Activated B cell treated with CpG ODN at 0.5 μM for 24 hours (primary cell): ENCODE measurements at regions of chr3 and their contacts with region 1.

Region 1: DNA sequence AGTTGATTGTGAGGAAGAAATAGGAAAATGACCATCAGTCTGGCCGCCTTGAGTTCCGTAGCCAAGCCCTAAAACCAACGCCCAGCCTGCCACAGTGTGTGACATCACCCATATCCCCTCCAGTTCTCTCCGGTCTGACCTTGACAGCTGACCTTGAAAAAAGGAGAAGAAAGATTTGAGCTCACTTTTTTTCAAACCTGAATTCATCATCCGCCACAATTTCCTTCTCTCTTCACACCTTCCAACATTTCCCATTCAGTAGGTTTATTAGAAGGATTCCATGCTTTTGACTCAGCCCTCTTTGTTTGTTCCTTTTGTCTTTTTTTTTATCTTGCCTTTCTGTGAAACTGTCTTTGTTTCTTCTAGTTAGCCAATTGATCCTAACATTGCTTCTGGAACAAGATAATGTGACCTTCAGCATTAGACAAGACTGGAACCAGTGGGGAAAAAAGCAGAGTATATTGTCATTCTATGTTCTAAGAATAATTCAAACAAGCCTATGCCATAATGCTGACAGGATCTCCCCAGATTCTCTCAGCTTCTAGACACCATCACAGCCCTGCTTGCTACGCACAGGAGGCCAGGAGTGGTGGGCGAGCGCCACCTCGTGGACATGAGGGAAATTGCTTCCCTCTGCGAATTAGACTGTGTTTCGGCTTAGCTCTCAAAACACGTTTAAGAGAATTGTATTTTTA is 283.1 kb downstream of the FGF12 start:
- DNase-seq: peak; percentile 51
- ATAC-seq: peak; percentile 62
- H3K4me3 Mint-ChIP-seq: no peak overlapping the region
- H3K27ac Mint-ChIP-seq: no peak overlapping the region
- H3K4me1 Mint-ChIP-seq: no peaks in the 10 kb centered on the region
- H3K27me3 Mint-ChIP-seq: peaks cover 21% of the 10 kb centered on the region
- CTCF ChIP-seq: peak; percentile 76

Region 2: DNA sequence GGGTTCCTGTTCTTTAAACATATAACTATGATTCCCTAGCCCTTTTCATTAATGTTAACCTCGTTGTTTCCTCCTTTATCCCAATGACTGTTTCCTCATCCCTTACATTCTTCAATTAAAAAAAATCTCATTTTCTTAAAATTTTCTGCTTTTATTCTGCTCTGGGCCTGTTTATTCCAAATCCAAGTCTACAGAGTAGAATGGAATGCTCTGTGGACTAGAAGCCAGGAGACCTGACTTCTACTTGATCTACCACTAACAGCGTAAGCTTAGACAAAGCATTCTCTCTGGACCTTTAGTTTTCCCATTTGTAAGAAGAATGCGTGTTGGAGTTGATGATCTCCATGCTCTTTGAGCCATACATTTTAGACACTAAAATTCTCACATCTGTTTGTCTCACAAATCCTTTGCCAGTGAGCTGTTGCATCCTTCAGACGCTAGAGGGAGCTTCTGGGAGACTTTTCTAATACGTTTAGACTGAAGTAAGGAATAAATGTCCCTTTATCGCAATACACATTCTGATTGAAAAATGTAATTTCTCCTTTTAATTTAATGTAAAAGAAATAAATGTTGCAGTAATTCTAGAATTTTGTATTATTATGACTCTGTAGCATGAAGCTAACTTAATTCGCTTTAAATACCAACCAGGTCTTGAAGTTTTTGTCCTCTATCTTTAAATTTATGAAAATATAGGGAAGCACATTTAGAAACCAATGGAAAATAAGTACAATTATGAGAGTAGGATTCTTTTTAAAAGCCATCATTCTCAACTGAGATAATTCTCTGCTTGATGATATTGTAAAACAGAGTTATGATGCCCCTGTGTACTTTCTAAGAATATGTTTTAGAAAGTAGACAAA is 1560.0 kb before region 1 on chr3:
- CTCF ChIA-PET with region 1: interaction called, 31 read pairs
- POLR2A ChIA-PET with region 1: interaction called, 3 read pairs
- intact Hi-C with region 1: loop called (anchors 1 kb)
- DNase-seq: no peak
- ATAC-seq: no peak
- H3K4me3 Mint-ChIP-seq: no peak overlapping the region
- H3K27ac Mint-ChIP-seq: no peak overlapping the region
- H3K4me1 Mint-ChIP-seq: no peaks in the 10 kb centered on the region
- H3K27me3 Mint-ChIP-seq: peaks cover 7% of the 10 kb centered on the region
- CTCF ChIP-seq: peak; percentile 90

Region 3: GRCh38 chr3:191136347-191136746 is 1307.9 kb before region 1 on chr3:
- CTCF ChIA-PET with region 1: interaction called, 13 read pairs
- POLR2A ChIA-PET with region 1: no interaction called
- intact Hi-C with region 1: loop called (anchors 1 kb)
- DNase-seq: no peak
- ATAC-seq: no peak
- H3K4me3 Mint-ChIP-seq: no peak overlapping the region
- H3K27ac Mint-ChIP-seq: no peak overlapping the region
- H3K4me1 Mint-ChIP-seq: peaks cover 38% of the 10 kb centered on the region
- H3K27me3 Mint-ChIP-seq: no peaks in the 10 kb centered on the region
- CTCF ChIP-seq: no peak

Region 4: DNA sequence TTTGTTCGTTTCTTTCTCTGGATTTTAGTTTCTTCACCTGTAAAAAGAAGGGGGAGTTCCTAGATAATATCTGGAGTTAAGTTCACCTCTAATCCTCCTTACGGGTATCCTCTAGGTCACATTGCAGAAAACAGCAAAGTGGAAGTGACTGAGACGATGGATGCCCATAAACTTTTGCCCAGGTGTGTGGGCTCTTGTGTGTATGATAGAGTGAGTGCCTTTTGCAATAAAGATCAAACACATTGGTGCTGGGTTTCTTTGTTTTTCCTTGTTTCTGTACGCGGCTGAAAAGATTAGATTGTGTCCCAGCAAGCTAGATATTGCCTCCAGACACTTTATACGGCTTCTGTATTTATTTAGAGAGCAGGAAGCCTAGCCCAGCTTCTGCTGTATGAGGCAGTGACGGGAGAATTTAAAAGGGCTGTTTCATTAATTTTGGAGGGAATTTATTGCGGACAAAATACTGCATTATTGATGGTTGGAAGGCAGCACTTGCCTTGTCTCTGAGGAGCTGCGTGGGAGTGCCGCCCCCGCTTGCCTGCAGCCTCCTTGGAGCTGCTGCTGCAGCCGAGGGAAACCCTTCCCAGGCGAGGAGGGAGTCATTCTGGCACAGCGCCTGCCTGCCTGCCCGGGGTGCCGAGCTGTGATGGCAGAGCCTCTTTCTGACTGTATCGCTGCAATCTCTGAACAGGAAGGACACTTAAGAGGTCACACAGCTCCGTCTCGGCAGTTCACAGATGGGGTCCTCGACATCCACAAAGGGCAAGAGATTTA is 944.7 kb before region 1 on chr3:
- CTCF ChIA-PET with region 1: no interaction called
- POLR2A ChIA-PET with region 1: no interaction called
- intact Hi-C with region 1: loop called (anchors 2 kb)
- DNase-seq: no peak
- ATAC-seq: no peak
- H3K4me3 Mint-ChIP-seq: no peak overlapping the region
- H3K27ac Mint-ChIP-seq: no peak overlapping the region
- H3K4me1 Mint-ChIP-seq: no peaks in the 10 kb centered on the region
- H3K27me3 Mint-ChIP-seq: peaks cover 12% of the 10 kb centered on the region
- CTCF ChIP-seq: no peak

Region 5: DNA sequence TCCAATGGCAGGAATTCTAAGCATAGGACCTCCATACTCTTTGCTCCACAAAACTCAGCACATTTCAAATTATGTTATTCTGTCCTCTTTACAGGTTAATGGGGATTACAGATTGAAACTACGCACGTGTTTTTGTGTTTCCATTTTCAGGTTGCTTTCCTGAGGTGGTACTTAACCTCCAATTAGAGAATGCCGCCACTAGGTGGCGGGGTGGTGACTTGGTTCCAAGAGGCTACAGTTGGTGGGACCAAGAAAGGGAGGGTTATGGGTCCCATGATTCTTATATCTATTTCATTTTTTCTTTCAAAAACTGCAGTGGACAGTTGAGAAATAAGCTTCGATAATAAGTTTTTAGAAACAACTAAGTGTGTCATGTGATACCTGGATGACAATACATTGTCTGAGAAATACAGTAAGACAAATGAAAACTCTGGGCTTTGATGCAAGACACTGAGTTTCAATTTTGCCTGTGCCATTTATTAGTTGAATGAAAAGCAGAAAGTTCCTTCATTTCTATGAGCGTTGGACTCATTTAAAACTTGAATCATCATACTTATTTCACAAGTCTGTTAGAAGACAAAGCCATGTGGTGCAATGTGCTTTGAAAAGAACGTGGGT is 255.9 kb before region 1 on chr3:
- CTCF ChIA-PET with region 1: interaction called, 5 read pairs
- POLR2A ChIA-PET with region 1: no interaction called
- intact Hi-C with region 1: loop called (anchors 1 kb)
- DNase-seq: no peak
- ATAC-seq: peak; percentile 45
- H3K4me3 Mint-ChIP-seq: no peak overlapping the region
- H3K27ac Mint-ChIP-seq: no peak overlapping the region
- H3K4me1 Mint-ChIP-seq: peaks cover 2% of the 10 kb centered on the region
- H3K27me3 Mint-ChIP-seq: peaks cover 8% of the 10 kb centered on the region
- CTCF ChIP-seq: no peak